ENCODE measurements at regions of chr15 and their contacts with region 1.

Region 1: GRCh38 chr15:88246666-88247446 is 9.7 kb downstream of the NTRK3 start:
- H3K4me3 ChIP-seq: no peak overlapping the region
- H3K27ac ChIP-seq: no peak overlapping the region
- H3K4me1 ChIP-seq: no peaks in the 10 kb centered on the region
- CTCF ChIP-seq: peak; percentile 85

Region 2: GRCh38 chr15:88232801-88233201 is 14.1 kb before region 1 on chr15:
- CTCF ChIA-PET with region 1: interaction called, 54 read pairs
- POLR2A ChIA-PET with region 1: no interaction called
- H3K4me3 ChIP-seq: no peak overlapping the region
- H3K27ac ChIP-seq: no peak overlapping the region
- H3K4me1 ChIP-seq: no peaks in the 10 kb centered on the region
- CTCF ChIP-seq: no peak

Region 3: GRCh38 chr15:88267720-88268333 is 21.0 kb after region 1 on chr15:
- CTCF ChIA-PET with region 1: interaction called, 182 read pairs
- POLR2A ChIA-PET with region 1: no interaction called
- H3K4me3 ChIP-seq: no peak overlapping the region
- H3K27ac ChIP-seq: no peak overlapping the region
- H3K4me1 ChIP-seq: no peaks in the 10 kb centered on the region
- CTCF ChIP-seq: no peak

Region 4: GRCh38 chr15:88331280-88331679 is 84.4 kb after region 1 on chr15:
- CTCF ChIA-PET with region 1: interaction called, 12 read pairs
- POLR2A ChIA-PET with region 1: no interaction called
- H3K4me3 ChIP-seq: no peak overlapping the region
- H3K27ac ChIP-seq: no peak overlapping the region
- H3K4me1 ChIP-seq: no peaks in the 10 kb centered on the region
- CTCF ChIP-seq: 0 out of 2 replicates have a peak, but pooled peaks have one; percentile 19

Measured in HEK293 (cell line).